MCF 10A (cell line): ENCODE measurements at regions of chr16 and their contacts with region 1.

Region 1: DNA sequence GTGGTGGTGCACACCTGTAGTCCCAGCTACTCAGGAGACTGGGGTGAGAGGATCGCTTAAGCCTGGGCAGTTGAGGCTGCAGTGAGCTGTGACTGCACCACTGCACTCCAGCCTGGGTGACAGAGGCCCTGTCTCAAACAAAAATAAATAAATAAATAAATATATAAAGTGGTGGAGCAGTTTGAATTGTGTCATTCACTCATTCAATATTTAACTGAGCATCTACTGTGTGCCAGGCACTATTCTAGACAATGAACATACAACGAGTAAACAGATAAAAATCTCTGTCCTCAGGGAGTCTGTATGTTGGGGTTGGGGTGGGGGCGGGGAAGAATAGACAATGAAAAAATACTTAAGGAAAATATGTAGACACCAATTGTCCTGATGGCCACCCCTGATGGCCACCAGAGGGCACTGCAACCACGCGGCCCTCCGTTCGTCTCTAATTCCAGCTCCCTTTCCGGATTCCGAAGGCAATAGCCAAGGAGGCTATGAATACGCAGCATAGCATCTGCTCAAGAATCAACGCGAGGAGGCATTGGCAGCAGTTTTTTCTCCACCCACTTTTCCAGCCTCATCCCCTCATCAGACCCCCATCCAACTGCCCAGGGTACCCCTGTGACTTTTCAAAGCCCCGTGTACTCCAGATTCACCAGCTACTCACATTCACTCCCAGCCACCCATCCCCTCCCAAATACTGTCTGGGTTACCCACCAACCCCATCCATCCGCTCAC is 21.4 kb downstream of the QPRT start:
- DNase-seq: peak; percentile 87
- H3K4me3 Mint-ChIP-seq: no peak overlapping the region
- H3K27ac Mint-ChIP-seq: no peak overlapping the region
- H3K4me1 Mint-ChIP-seq: no peaks in the 10 kb centered on the region
- H3K27me3 Mint-ChIP-seq: peaks cover 22% of the 10 kb centered on the region
- CTCF ChIP-seq: peak; percentile 95

Region 2: DNA sequence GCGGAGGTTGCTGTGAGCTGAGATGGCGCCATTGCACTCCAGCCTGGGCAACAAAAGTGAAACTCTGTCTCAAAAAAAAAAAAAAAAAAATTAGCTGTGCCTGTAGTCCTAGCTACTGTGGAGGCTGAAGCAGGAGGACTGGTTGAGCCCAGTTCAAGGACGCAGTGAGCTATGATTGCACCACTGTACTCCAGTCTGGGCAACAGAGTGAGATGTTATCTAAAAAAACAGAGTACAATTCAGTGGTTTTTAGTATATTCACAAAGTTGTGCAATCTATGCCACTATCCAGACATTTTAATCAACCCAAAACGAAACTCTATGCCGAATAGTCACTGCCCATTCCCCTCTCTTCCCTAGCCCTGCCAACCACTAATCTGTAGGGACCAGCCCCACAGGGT is 20.3 kb after region 1 on chr16:
- CTCF ChIA-PET with region 1: interaction called, 22 read pairs
- POLR2A ChIA-PET with region 1: interaction called, 4 read pairs
- intact Hi-C with region 1: no loop called
- DNase-seq: no peak
- H3K4me3 Mint-ChIP-seq: no peak overlapping the region
- H3K27ac Mint-ChIP-seq: peak overlapping the region; percentile 16
- H3K4me1 Mint-ChIP-seq: peaks cover 6% of the 10 kb centered on the region
- H3K27me3 Mint-ChIP-seq: peaks cover 11% of the 10 kb centered on the region
- CTCF ChIP-seq: no peak

Region 3: DNA sequence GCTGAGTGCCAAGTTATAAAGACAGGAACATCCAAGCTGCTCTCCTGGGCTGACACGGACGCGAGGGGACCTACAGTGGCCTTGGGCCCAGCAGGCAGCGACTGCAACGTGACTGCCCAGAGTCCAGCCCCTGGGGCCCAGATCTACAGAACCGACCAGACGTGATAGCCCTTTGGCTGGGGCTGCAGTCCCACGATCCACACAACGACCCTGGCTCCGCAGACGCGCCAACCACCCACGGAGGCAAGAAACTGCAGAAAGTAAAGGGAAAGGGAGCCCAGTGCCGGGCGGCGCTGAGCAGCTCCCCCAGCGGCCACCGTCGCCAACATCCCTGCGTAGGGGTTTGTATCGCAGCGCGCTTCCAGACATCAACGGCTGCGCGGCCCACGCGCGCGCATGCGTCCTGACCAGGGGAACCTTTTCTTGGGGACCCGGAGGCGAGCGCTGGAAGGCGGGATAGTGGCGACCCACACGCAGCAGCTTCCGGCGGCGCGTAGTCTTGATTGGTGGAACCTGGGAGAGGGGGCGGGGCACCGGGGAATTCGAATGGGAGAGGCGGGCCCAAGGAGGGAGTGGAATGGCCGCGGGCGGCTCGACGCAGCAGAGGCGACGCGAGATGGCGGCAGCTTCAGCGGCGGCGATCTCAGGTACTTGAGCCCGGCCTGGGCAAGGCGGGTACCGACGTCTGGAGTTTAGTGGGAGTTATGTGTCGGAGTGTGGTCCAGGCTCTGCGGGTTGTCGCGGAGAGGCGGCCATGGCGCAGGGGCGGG is 89.9 kb after region 1 on chr16 and contains the start of gene KIF22:
- CTCF ChIA-PET with region 1: interaction called, 7 read pairs
- POLR2A ChIA-PET with region 1: interaction called, 7 read pairs
- intact Hi-C with region 1: loop called (anchors 2 kb)
- DNase-seq: peak; percentile 99
- H3K4me3 Mint-ChIP-seq: peak within 1 kb of the TSS; percentile 84
- H3K27ac Mint-ChIP-seq: peak within 1 kb of the TSS; percentile 89
- H3K4me1 Mint-ChIP-seq: peaks cover 28% of the 10 kb centered on the region
- H3K27me3 Mint-ChIP-seq: no peaks in the 10 kb centered on the region
- CTCF ChIP-seq: peak; percentile 59
- total RNA-seq, gene KIF22: 36.3 and 53.8 TPM in 2 replicates

Region 4: GRCh38 chr16:29826342-29826695 is 125.9 kb after region 1 on chr16:
- CTCF ChIA-PET with region 1: no interaction called
- POLR2A ChIA-PET with region 1: no interaction called
- intact Hi-C with region 1: no loop called
- DNase-seq: no peak
- H3K4me3 Mint-ChIP-seq: no peak overlapping the region
- H3K27ac Mint-ChIP-seq: no peak overlapping the region
- H3K4me1 Mint-ChIP-seq: peaks cover 12% of the 10 kb centered on the region
- H3K27me3 Mint-ChIP-seq: no peaks in the 10 kb centered on the region
- CTCF ChIP-seq: no peak

Region 5: DNA sequence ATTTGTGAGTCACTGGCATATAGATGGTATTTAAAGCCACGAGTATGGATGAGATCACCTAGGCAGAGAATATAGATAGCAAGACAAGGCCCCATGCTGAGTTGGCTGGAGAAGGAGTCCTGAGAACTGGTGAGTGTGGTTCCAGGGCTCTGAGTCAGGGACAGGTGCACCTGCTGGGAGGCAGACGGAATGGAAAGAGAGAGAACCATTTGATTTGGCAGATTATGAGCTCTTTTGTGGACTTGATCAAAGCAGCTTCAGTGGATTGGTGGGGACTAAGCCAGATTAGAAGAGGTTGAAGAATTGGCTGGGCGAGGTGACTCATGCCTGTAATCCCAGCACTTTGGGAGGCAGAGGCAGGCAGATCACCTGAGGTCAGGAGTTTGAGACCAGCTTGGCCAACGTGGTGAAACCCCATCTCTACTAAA is 318.3 kb after region 1 on chr16:
- CTCF ChIA-PET with region 1: interaction called, 8 read pairs
- POLR2A ChIA-PET with region 1: no interaction called
- intact Hi-C with region 1: loop called (anchors 2 kb)
- DNase-seq: peak; percentile 37
- H3K4me3 Mint-ChIP-seq: no peak overlapping the region
- H3K27ac Mint-ChIP-seq: no peak overlapping the region
- H3K4me1 Mint-ChIP-seq: peaks cover 6% of the 10 kb centered on the region
- H3K27me3 Mint-ChIP-seq: no peaks in the 10 kb centered on the region
- CTCF ChIP-seq: no peak